Posterior vena cava (tissue), 2 donors: ENCODE measurements at regions of chr2 and their contacts with region 1.

Region 1: GRCh38 chr2:1193801-1194200 is 219.5 kb upstream of the TPO start:
- DNase-seq: no peak

Region 2: GRCh38 chr2:1210352-1210751 is 16.6 kb after region 1 on chr2:
- intact Hi-C with region 1: loop called in 1 of 2 experiments (anchors 1 kb)
- DNase-seq: no peak

Region 3: GRCh38 chr2:1742681-1743395 is 549.0 kb after region 1 on chr2:
- intact Hi-C with region 1: no loop called
- DNase-seq: peak; percentile 94